Activated naive CD4-positive, alpha-beta T cell treated with anti-CD3 and anti-CD28 coated beads for 36 hours (primary cell): ENCODE measurements at regions of chr5 and their contacts with region 1.

Region 1: DNA sequence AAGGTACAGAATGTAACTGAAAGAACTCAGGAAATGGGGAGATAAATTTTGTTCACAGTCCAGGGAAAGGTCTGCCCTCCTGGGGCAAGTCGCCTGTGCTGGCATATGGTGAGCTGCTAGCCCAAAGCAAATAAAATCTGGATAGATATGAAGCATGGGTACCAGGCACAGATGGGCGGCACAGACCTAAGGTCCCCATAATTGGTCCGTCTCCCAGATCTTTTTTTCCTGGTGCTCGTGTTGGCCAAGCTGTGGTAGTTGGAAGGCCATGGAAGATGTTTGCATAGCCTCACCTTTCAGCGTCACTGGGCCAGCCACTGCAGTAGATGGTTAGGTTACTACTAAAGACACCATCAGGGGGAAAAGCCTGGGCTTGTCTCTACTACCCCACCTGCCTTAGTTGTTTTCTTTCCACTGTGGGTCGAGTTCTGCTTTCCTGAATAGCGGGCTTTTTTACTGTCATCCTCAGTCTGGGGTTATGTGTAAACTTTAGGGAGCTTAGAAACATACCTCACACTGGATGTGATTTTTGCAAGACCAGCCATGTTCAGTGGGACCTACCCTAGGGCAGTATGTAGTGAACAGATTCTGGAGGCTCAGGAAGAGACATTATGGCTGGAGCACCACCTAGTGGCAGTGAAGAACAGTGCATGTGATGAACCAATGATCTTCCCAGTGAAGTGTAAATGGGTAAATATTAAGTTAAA is 24.2 kb upstream of the GLRX start:
- DNase-seq: peak; percentile 81
- H3K4me3 Mint-ChIP-seq: no peak overlapping the region
- H3K27ac Mint-ChIP-seq: no peak overlapping the region
- H3K4me1 Mint-ChIP-seq: peaks cover 9% of the 10 kb centered on the region
- H3K27me3 Mint-ChIP-seq: no peaks in the 10 kb centered on the region

Region 2: GRCh38 chr5:95283761-95284415 is 562.8 kb before region 1 on chr5:
- CTCF ChIA-PET with region 1: no interaction called
- intact Hi-C with region 1: loop called (anchors 1 kb)
- DNase-seq: peak; percentile 41
- H3K4me3 Mint-ChIP-seq: peak overlapping the region; percentile 45
- H3K27ac Mint-ChIP-seq: no peak overlapping the region
- H3K4me1 Mint-ChIP-seq: peaks cover 9% of the 10 kb centered on the region
- H3K27me3 Mint-ChIP-seq: peaks cover 33% of the 10 kb centered on the region

Region 3: DNA sequence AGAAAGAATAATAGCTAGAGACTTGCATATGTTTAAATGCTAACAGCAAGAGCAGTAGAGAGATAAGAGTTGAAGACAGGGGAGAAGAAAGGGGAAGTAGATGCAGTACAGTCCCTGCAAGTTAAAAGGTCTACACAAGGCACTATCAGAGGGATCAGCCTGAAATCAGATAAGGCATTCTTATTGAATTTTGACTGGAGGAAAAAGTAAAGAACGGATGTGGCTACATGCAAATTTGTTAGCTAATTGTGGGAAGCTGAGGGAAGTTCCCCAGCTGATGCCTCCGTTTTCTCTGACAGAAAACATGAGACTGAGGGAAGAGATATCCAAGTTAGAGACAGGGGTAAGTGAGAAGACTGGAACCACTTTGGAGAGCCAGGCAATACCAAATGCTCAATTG is 128.5 kb before region 1 on chr5:
- CTCF ChIA-PET with region 1: no interaction called
- intact Hi-C with region 1: loop called (anchors 2 kb)
- DNase-seq: peak; percentile 60
- H3K4me3 Mint-ChIP-seq: no peak overlapping the region
- H3K27ac Mint-ChIP-seq: no peak overlapping the region
- H3K4me1 Mint-ChIP-seq: peaks cover 22% of the 10 kb centered on the region
- H3K27me3 Mint-ChIP-seq: peaks cover 11% of the 10 kb centered on the region

Region 4: GRCh38 chr5:95835682-95836385 is 10.9 kb before region 1 on chr5:
- CTCF ChIA-PET with region 1: interaction called, 15 read pairs
- intact Hi-C with region 1: loop called (anchors 1 kb)
- DNase-seq: peak; percentile 57
- H3K4me3 Mint-ChIP-seq: peak overlapping the region; percentile 77
- H3K27ac Mint-ChIP-seq: peak overlapping the region; percentile 92
- H3K4me1 Mint-ChIP-seq: peaks cover 47% of the 10 kb centered on the region
- H3K27me3 Mint-ChIP-seq: no peaks in the 10 kb centered on the region

Region 5: GRCh38 chr5:95927927-95928723 is 81.4 kb after region 1 on chr5:
- CTCF ChIA-PET with region 1: no interaction called
- intact Hi-C with region 1: no loop called
- DNase-seq: no peak
- H3K4me3 Mint-ChIP-seq: no peak overlapping the region
- H3K27ac Mint-ChIP-seq: peak overlapping the region; percentile 59
- H3K4me1 Mint-ChIP-seq: peaks cover 21% of the 10 kb centered on the region
- H3K27me3 Mint-ChIP-seq: no peaks in the 10 kb centered on the region